Right ventricle myocardium inferior (tissue), 1 donor: ENCODE measurements at regions of chr13 and their contacts with region 1.

Region 1: DNA sequence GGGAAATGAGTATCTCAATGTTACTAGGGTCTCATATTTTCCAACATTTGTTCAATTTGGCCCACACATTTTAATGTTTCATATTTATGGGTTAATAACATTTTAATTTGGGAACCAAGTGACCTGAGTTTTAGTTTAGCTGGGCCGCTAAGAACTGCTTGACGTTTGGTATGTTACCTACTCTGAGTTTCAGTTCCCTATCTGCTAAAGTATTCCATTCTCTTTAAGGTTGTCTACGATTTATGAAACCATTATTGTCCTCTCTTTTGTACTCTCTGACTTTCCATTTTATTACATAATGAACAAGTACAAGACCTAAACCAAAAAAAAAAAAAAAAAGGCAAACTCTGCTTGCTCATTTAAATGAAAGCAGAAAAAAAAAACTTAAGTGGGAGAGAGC is 89.9 kb downstream of the FGF14 start:
- DNase-seq: no peak
- ATAC-seq: no peak

Region 2: GRCh38 chr13:102003848-102004570 is 307.9 kb before region 1 on chr13:
- intact Hi-C with region 1: loop called (anchors 10 kb)
- DNase-seq: no peak
- ATAC-seq: peak; percentile 37

Region 3: GRCh38 chr13:102394158-102395053 is 82.5 kb after region 1 on chr13:
- intact Hi-C with region 1: loop called (anchors 5 kb)
- DNase-seq: peak; percentile 94
- ATAC-seq: peak; percentile 97

Region 4: DNA sequence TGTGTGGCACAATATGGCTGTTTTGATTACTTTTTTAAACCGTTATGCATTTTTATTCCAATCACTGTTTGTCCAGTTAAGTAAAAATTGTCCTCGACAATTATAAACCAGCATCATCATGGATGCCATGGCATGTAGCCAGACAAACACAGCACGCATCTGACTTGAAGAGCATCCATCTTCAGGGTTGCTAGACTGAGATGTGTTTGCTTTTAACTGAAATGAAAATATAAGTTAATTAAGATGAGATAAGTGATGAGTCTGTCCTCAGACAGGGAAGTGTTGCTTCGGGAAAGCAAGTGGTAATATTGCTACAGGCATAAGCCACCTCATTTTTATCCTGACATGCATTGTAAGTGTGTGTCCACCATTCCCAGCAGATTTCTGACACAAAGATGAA is 192.1 kb after region 1 on chr13:
- intact Hi-C with region 1: no loop called
- DNase-seq: no peak
- ATAC-seq: no peak